ENCODE measurements at regions of chr1 and their contacts with region 1.

Region 1: GRCh38 chr1:38859561-38860453 is at the start of gene RRAGC:
- DNase-seq: peak; percentile 99
- ATAC-seq: peak; percentile 99
- H3K4me3 Mint-ChIP-seq: peak within 1 kb of the TSS; percentile 96
- H3K27ac Mint-ChIP-seq: peak within 1 kb of the TSS; percentile 71
- H3K4me1 Mint-ChIP-seq: peaks cover 33% of the 10 kb centered on the region
- H3K27me3 Mint-ChIP-seq: no peaks in the 10 kb centered on the region
- total RNA-seq, gene RRAGC: 14.3 to 14.9 TPM

Region 2: GRCh38 chr1:38418195-38419030 is 441.4 kb before region 1 on chr1:
- CTCF ChIA-PET with region 1: no interaction called
- POLR2A ChIA-PET with region 1: no interaction called
- DNase-seq: no peak
- ATAC-seq: no peak
- H3K4me3 Mint-ChIP-seq: no peak overlapping the region
- H3K27ac Mint-ChIP-seq: no peak overlapping the region
- H3K4me1 Mint-ChIP-seq: no peaks in the 10 kb centered on the region
- H3K27me3 Mint-ChIP-seq: peaks cover 20% of the 10 kb centered on the region

Region 3: DNA sequence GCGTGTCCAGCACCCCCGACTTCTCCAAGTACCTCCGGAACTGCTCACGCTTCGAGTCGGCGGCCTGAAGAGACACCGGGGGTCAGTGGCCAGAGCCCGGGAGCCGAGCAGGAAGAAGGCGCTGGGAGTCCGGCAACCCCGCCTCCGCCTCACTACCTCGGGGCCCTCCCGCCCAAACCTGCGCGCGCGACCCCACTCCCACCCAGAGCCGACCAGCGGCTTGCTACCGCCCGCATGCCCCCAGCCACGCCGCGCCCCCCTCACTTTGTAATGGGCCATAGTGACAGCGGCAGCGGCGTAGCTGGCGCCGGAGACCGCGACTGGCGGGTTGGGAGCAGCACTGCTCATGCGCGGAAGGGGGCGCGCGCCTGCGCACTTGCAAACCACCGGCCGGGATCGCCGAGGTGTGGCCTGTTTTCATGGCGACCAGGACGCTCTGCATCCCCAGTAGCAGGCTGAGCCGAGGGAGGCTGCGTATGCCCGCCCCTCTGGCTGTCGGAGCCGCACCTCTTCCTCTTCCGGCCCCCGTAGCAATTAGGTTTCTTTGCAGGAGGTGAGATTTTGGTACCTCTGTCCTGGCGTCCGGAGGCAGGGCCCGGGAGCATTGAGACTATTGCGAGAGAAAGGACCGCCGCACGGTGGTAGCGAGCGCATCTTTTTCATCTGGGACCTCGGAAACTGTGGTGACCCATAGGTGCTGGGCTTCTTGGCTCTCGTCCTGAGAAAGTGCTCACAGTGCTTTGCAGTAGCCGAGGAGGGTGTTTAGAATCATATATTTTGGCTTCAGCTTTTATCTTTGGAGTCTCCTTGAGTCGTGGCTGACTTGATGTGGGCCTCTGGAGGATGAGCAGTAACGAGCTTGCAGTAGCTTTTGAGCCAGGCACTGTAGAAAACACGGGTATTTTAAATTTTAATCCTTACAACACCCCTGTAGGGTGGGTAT is 13.5 kb after region 1 on chr1 and contains the start of gene MYCBP:
- CTCF ChIA-PET with region 1: interaction called, 5 read pairs
- POLR2A ChIA-PET with region 1: interaction called, 10 read pairs
- DNase-seq: peak; percentile 98
- ATAC-seq: peak; percentile 99
- H3K4me3 Mint-ChIP-seq: peak within 1 kb of the TSS; percentile 95
- H3K27ac Mint-ChIP-seq: peak within 1 kb of the TSS; percentile 87
- H3K4me1 Mint-ChIP-seq: peaks cover 32% of the 10 kb centered on the region
- H3K27me3 Mint-ChIP-seq: no peaks in the 10 kb centered on the region
- total RNA-seq, gene MYCBP: 52.7 to 61.1 TPM